CD14-positive monocyte (primary cell): ENCODE measurements at regions of chr10 and their contacts with region 1.

Region 1: DNA sequence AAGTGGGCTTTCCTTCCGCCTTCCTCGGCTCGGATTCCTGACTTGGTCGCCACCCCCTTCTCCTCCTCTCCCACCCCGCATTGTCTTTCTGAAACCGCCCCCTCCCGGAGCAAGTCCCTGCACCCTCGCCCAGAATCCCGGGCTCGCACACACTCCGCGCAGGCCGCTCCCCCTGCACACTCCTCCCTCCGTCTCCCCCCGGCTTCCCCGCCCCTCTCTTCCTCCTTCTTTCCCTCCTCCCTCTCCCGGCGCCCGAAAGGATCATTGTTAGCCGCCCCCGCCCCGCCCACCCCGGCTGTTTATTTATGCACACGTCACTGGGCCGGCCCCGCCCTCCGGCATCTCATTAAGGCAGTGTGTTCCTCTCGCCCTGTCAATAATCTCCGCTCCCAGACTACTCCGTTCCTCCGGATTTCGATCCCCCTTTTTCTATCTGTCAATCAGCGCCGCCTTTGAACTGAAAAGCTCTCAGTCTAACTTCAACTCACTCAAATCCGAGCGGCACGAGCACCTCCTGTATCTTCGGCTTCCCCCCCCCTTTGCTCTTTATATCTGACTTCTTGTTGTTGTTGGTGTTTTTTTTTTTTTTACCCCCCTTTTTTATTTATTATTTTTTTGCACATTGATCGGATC is at the start of gene TCF7L2:
- DNase-seq: peak; percentile 87 to 90 (median 90)
- H3K4me3 ChIP-seq: peak within 1 kb of the TSS; percentile 87 to 100 (median 88)
- H3K4me3 Mint-ChIP-seq: peak within 1 kb of the TSS; percentile 99
- H3K27ac ChIP-seq: peak within 1 kb of the TSS; percentile 58 to 80
- H3K27ac Mint-ChIP-seq: peak within 1 kb of the TSS; percentile 91 to 99 (median 98)
- H3K4me1 ChIP-seq: peaks cover 31 to 41% of the 10 kb centered on the region in 2 donors
- H3K4me1 Mint-ChIP-seq: peaks cover 41% of the 10 kb centered on the region
- H3K27me3 ChIP-seq: peaks cover 12 to 22% of the 10 kb centered on the region in 2 donors
- H3K27me3 Mint-ChIP-seq: peaks cover 16 to 28% (median 22%) of the 10 kb centered on the region in 3 donors
- CTCF ChIP-seq: no peak
- polyA plus RNA-seq, gene TCF7L2: 2.1 to 23.5 (median 6.1) TPM

Region 2: GRCh38 chr10:111455776-111456426 is 1494.1 kb before region 1 on chr10:
- intact Hi-C with region 1: no loop called
- DNase-seq: no peak
- H3K4me3 ChIP-seq: no peak overlapping the region
- H3K4me3 Mint-ChIP-seq: no peak overlapping the region
- H3K27ac ChIP-seq: no peak overlapping the region
- H3K27ac Mint-ChIP-seq: no peak overlapping the region
- H3K4me1 ChIP-seq: no peaks in the 10 kb centered on the region
- H3K4me1 Mint-ChIP-seq: no peaks in the 10 kb centered on the region
- H3K27me3 ChIP-seq: no peaks in the 10 kb centered on the region
- H3K27me3 Mint-ChIP-seq: peaks cover 0 to 2% (median 0%) of the 10 kb centered on the region in 3 donors
- CTCF ChIP-seq: no peak

Region 3: GRCh38 chr10:112811740-112812551 is 138.0 kb before region 1 on chr10:
- intact Hi-C with region 1: loop called (anchors 2 to 10 kb)
- DNase-seq: peak in 1 of 3 donors; percentile 5
- H3K4me3 ChIP-seq: no peak overlapping the region
- H3K4me3 Mint-ChIP-seq: no peak overlapping the region
- H3K27ac ChIP-seq: no peak overlapping the region
- H3K27ac Mint-ChIP-seq: peak overlapping the region in 6 of 7 donors; percentile 25 to 84 (median 44)
- H3K4me1 ChIP-seq: peaks cover 42 to 46% of the 10 kb centered on the region in 2 donors
- H3K4me1 Mint-ChIP-seq: peaks cover 53% of the 10 kb centered on the region
- H3K27me3 ChIP-seq: no peaks in the 10 kb centered on the region
- H3K27me3 Mint-ChIP-seq: peaks cover 0 to 3% (median 1%) of the 10 kb centered on the region in 3 donors
- CTCF ChIP-seq: no peak

Region 4: DNA sequence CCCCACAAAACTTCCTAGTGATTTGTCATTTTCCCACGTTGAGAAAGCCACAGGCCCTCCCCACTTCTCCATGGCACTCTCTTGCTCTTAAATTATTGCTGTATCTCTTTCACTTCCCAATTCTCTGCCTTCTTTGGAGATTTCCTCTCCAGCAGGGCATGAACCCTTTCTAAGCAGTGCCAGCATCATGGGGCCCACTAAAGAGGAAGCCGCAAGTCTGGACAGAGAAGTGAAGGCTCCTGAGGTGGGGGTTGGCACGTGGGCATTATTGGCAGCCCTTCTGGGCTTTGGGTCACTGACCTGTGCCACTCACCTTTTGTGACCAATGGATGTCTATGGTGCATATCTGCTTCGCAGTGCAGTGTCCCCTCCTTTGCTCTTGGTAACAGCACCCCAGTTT is 97.7 kb before region 1 on chr10:
- intact Hi-C with region 1: loop called in 1 of 2 experiments (anchors 10 kb)
- DNase-seq: peak; percentile 89 to 96 (median 92)
- H3K4me3 ChIP-seq: peak overlapping the region in 1 of 3 experiments; percentile 43
- H3K4me3 Mint-ChIP-seq: peak overlapping the region; percentile 13 to 84
- H3K27ac ChIP-seq: peak overlapping the region in 1 of 2 donors; percentile 59
- H3K27ac Mint-ChIP-seq: peak overlapping the region; percentile 90 to 99 (median 94)
- H3K4me1 ChIP-seq: peaks cover 48 to 63% of the 10 kb centered on the region in 2 donors
- H3K4me1 Mint-ChIP-seq: peaks cover 61% of the 10 kb centered on the region
- H3K27me3 ChIP-seq: peaks cover 5 to 15% of the 10 kb centered on the region in 2 donors
- H3K27me3 Mint-ChIP-seq: peaks cover 13 to 38% (median 31%) of the 10 kb centered on the region in 3 donors
- CTCF ChIP-seq: no peak

Region 5: DNA sequence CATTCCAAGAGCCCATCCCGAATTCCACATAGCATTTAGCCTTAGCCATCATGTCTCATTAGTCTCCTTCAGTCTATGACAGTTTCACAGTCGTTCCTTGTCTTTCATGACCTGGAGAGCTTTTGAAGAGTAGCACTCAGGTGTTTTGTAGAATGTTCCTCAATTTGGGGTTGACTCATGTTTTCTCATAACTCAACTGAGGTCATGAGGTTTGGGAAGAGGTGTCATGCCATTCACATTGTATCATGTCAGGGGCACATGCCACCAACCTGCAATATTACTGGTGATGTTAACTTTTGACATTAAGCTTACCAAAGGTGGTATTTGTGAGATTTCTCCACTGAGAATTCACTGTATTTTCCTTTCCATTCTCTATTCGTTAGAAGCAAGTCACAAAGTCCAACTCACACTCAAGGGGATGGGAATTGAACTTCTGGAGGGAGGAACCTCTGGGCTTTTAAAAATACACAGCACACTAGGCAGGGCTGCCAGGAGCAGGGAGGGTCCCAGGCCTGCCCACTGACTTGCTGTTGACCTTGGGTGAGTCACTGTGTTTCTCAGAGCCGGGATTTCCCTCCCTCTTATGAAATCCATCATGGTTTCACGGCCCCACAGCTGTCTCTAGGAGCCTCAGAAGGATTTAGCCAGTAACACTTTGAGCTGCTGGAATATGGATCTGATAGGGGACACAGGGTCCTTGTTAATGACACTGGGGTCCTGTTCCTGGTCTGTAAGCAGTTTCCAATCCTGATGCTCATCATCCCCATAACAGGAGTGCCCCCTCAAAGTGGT is 74.3 kb before region 1 on chr10:
- intact Hi-C with region 1: loop called in 1 of 2 experiments (anchors 2 kb)
- DNase-seq: peak; percentile 66 to 87 (median 75)
- H3K4me3 ChIP-seq: no peak overlapping the region
- H3K4me3 Mint-ChIP-seq: peak overlapping the region in 1 of 2 donors; percentile 15
- H3K27ac ChIP-seq: peak overlapping the region in 1 of 2 donors; percentile 55
- H3K27ac Mint-ChIP-seq: peak overlapping the region; percentile 28 to 89 (median 83)
- H3K4me1 ChIP-seq: peaks cover 15 to 19% of the 10 kb centered on the region in 2 donors
- H3K4me1 Mint-ChIP-seq: peaks cover 24% of the 10 kb centered on the region
- H3K27me3 ChIP-seq: no peaks in the 10 kb centered on the region
- H3K27me3 Mint-ChIP-seq: peaks cover 1 to 9% (median 4%) of the 10 kb centered on the region in 3 donors
- CTCF ChIP-seq: no peak

Region 6: GRCh38 chr10:113093188-113094113 is 143.5 kb after region 1 on chr10:
- intact Hi-C with region 1: loop called (anchors 5 to 10 kb)
- DNase-seq: peak in 2 of 3 donors; percentile 35 to 59
- H3K4me3 ChIP-seq: peak overlapping the region in 1 of 3 experiments; percentile 35
- H3K4me3 Mint-ChIP-seq: peak overlapping the region in 1 of 2 donors; percentile 70
- H3K27ac ChIP-seq: peak overlapping the region in 1 of 2 donors; percentile 67
- H3K27ac Mint-ChIP-seq: peak overlapping the region; percentile 84 to 97 (median 89)
- H3K4me1 ChIP-seq: peaks cover 35 to 48% of the 10 kb centered on the region in 2 donors
- H3K4me1 Mint-ChIP-seq: peaks cover 54% of the 10 kb centered on the region
- H3K27me3 ChIP-seq: peaks cover 11 to 57% of the 10 kb centered on the region in 2 donors
- H3K27me3 Mint-ChIP-seq: peaks cover 42 to 87% (median 68%) of the 10 kb centered on the region in 3 donors
- CTCF ChIP-seq: no peak